ENCODE measurements at regions of chr16 and their contacts with region 1.

Region 1: DNA sequence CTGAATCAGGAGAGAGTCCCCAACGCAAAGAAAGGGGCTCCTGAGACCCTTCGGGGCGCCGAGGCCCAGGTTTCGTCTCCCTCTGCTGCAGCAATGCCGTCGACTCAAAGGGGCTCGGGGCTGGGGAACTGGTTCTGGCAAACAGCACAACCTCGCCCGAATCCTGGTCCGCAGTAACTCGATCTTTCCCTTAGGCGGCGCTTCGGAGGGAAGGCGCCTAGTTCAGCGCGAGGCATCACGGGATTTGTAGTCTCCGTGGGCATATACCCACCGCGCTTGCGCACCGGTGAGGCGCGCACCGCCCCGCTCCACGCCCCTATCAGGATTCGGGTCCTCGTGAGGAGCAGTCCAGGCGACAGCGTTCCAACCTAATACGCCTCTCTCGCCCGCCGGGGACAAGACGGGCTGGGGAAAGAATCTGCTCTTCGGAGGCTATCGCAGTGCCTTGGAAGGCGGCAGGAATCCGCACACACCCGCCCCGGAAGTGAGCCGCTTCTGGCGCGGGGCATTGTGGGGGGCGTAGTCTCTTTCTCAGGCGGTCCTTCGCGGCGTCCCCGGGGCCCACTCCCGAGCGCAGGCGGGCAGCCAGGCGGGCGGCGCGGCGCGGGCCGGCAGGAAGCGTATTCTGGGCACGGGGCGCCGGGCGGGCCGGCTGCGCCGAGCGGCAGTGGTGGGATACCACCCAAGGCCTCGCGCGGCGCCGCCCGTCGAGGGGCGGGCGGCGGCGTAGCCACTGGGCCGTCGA is at the start of gene THAP11:
- DNase-seq: peak; percentile 97
- H3K4me3 Mint-ChIP-seq: peak within 1 kb of the TSS; percentile 90
- H3K27ac Mint-ChIP-seq: peak within 1 kb of the TSS; percentile 95
- H3K4me1 Mint-ChIP-seq: peaks cover 34% of the 10 kb centered on the region
- H3K27me3 Mint-ChIP-seq: no peaks in the 10 kb centered on the region
- total RNA-seq, gene THAP11: 31.8 to 32.1 TPM

Region 2: DNA sequence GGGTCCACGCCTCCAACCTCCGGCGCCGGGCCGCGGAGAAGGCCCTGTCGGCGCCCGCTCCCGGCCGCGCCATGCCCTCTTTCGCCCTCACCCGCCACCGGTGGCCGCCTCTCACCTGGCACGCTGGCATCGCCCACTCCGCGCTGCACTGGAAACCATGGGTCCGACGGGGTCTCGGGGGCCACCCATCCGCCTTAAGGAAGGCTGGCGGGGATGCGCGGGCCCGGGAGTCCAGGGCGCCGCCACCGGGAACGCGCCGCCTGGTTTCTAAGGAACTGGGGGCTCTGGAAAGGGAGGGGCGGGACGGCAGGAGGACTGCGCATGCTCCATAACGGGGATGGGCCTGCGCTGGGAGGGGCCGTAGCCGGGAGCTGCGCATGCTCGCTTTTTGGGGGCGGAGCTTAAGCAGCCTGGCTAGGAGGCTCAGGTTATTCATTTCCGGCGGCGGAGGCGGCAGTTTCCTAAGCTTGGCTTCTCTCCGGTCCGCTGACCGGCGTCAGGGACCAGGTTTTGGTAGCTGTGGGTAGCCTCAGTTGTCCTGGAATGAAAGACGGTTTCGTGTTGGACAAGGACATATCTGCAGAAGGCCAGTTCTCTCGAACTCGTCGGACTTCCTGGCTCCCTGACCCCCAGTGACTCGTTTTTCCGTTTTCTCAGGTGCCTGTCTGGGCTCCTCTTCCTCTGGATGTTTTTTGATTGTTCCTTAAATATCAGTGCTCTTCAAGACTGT is 122.7 kb before region 1 on chr16 and contains the start of gene GFOD2:
- CTCF ChIA-PET with region 1: no interaction called
- POLR2A ChIA-PET with region 1: no interaction called
- intact Hi-C with region 1: loop called (anchors 1 kb)
- DNase-seq: peak; percentile 99
- H3K4me3 Mint-ChIP-seq: peak within 1 kb of the TSS; percentile 94
- H3K27ac Mint-ChIP-seq: peak within 1 kb of the TSS; percentile 96
- H3K4me1 Mint-ChIP-seq: peaks cover 35% of the 10 kb centered on the region
- H3K27me3 Mint-ChIP-seq: no peaks in the 10 kb centered on the region
- total RNA-seq, gene GFOD2: 12.6 to 13.7 TPM

Region 3: DNA sequence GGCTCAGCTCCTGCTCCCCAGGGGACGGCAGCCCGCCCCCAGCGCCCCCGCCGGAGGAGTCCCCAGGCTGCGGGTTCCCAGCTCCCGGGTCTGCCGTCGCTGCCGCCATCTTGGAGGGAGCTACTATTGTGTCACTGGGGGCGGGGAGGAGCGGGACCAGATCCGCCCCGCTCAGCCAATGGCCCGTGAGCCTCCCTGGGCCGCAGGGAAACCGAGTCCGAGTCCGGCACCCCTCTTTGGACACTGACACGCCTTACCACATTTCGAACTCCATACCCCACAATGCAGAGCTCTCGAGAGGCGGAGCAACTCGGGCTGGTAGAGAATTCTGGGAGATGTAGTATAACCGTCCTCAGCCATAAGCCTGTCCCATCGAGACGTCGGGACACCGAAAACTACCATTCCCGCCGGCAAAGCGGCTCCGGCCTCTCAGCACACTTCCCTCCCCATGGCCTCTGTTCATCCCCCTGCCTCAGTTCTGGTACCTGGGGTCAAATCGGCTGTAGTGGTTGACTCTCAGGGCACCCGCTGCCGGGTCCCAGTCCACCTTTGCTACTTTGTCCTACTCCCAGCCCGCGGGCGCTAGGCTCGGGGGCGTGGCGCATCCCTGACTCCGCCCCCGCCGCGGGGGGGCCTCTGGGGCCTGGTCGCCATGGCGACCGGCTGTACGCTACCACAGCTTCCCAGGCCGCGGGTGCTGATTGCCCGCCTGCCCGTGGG is 35.3 kb before region 1 on chr16 and contains the starts of genes RANBP10 and TSNAXIP1:
- CTCF ChIA-PET with region 1: interaction called, 5 read pairs
- POLR2A ChIA-PET with region 1: interaction called, 10 read pairs
- intact Hi-C with region 1: loop called (anchors 1 kb)
- DNase-seq: peak; percentile 98
- H3K4me3 Mint-ChIP-seq: peak within 1 kb of the TSS; percentile 93
- H3K27ac Mint-ChIP-seq: peak within 1 kb of the TSS; percentile 91
- H3K4me1 Mint-ChIP-seq: peaks cover 39% of the 10 kb centered on the region
- H3K27me3 Mint-ChIP-seq: no peaks in the 10 kb centered on the region
- total RNA-seq, gene RANBP10: 14.9 to 18.1 TPM
- total RNA-seq, gene TSNAXIP1: 0.77 to 0.81 TPM

Region 4: GRCh38 chr16:67892899-67893742 is 51.2 kb after region 1 on chr16 and contains the start of gene PSKH1:
- CTCF ChIA-PET with region 1: no interaction called
- POLR2A ChIA-PET with region 1: interaction called, 3 read pairs
- intact Hi-C with region 1: loop called (anchors 1 kb)
- DNase-seq: peak; percentile 98
- H3K4me3 Mint-ChIP-seq: peak within 1 kb of the TSS; percentile 96
- H3K27ac Mint-ChIP-seq: peak within 1 kb of the TSS; percentile 89
- H3K4me1 Mint-ChIP-seq: peaks cover 29% of the 10 kb centered on the region
- H3K27me3 Mint-ChIP-seq: no peaks in the 10 kb centered on the region
- total RNA-seq, gene PSKH1: 10.0 to 11.7 TPM

Measured in activated CD4-positive, alpha-beta memory T cell treated with anti-CD3 and anti-CD28 coated beads for 36 hours (primary cell).